Lower leg skin (tissue), 4 donors: ENCODE measurements at regions of chr7 and their contacts with region 1.

Region 1: GRCh38 chr7:86920154-86920553 is 139.3 kb downstream of the ELAPOR2 start:
- DNase-seq: no peak
- H3K4me3 ChIP-seq: no peak overlapping the region
- CTCF ChIP-seq: no peak
- POLR2A ChIP-seq: no peak

Region 2: GRCh38 chr7:86745013-86745745 is 175.0 kb before region 1 on chr7:
- intact Hi-C with region 1: no loop called
- DNase-seq: no peak
- H3K4me3 ChIP-seq: no peak overlapping the region
- CTCF ChIP-seq: no peak
- POLR2A ChIP-seq: no peak

Region 3: GRCh38 chr7:86939197-86939814 is 19.2 kb after region 1 on chr7:
- intact Hi-C with region 1: no loop called
- DNase-seq: peak in 1 of 2 donors; percentile 58
- H3K4me3 ChIP-seq: no peak overlapping the region
- CTCF ChIP-seq: no peak
- POLR2A ChIP-seq: no peak

Region 4: DNA sequence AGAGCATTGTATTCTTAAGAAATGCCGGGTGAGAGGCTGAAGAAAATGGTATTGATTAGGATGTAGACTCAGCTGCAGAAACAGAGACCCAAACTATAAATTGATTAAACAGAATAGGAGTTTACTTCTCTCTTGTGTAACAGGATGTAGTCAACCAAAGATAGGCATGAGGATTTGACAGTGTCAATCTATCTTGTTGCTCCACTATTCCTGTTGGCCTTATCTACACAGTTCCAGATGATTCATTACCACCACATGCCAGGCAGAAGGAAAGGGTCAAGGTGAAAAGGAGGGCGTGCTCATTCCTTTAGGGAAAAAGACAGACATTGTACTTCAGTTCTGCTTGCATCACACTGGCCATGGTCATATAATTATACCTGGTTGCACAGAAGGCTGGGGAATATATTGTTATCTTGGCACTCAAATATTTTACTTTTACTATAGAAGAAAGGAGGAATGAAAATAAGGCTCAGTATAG is 220.2 kb after region 1 on chr7:
- intact Hi-C with region 1: loop called (anchors 2 kb)
- DNase-seq: no peak
- H3K4me3 ChIP-seq: no peak overlapping the region
- CTCF ChIP-seq: no peak
- POLR2A ChIP-seq: no peak

Region 5: DNA sequence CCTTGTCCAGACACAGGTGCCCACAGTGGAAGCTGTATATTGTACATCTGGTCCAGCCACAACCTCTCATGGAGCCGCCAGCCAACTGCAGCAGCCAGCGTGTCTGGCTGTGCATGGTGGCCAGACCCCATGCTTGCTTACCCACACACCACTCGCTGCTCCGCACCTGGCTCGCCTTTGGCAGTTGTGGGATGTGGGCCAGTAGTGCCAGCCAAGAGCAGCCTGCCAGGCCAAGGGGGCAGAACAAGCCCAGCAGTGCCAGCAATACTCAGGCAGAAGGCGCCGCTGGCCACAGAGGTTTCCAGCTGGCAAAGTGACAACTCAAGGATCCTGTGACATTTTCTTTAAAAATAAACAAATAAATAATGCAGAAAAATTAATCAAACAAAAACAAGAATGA is 311.1 kb after region 1 on chr7:
- intact Hi-C with region 1: loop called (anchors 5 kb)
- DNase-seq: no peak
- H3K4me3 ChIP-seq: no peak overlapping the region
- CTCF ChIP-seq: no peak
- POLR2A ChIP-seq: no peak